Endothelial cell of umbilical vein (primary cell): ENCODE measurements at regions of chr2 and their contacts with region 1.

Region 1: GRCh38 chr2:112626604-112627059 is 19.1 kb upstream of the SLC20A1 start:
- DNase-seq: peak; percentile 86
- H3K4me3 ChIP-seq: peak overlapping the region in 1 of 3 experiments; percentile 14
- H3K27ac ChIP-seq: peak overlapping the region; percentile 91
- H3K4me1 ChIP-seq: peaks cover 73% of the 10 kb centered on the region
- H3K27me3 ChIP-seq: no peaks in the 10 kb centered on the region
- CTCF ChIP-seq: peak; percentile 93
- POLR2A ChIP-seq: no peak

Region 2: GRCh38 chr2:112645310-112646101 is 18.9 kb after region 1 on chr2 and contains the start of gene SLC20A1:
- CTCF ChIA-PET with region 1: interaction called, 92 read pairs
- POLR2A ChIA-PET with region 1: interaction called, 43 read pairs
- dilution Hi-C with region 1: no loop called
- intact Hi-C with region 1: loop called (anchors 1 kb)
- DNase-seq: peak; percentile 91
- H3K4me3 ChIP-seq: peak within 1 kb of the TSS; percentile 84 to 90 (median 89)
- H3K27ac ChIP-seq: peak within 1 kb of the TSS; percentile 90
- H3K4me1 ChIP-seq: peaks cover 71% of the 10 kb centered on the region
- H3K27me3 ChIP-seq: no peaks in the 10 kb centered on the region
- CTCF ChIP-seq: peak; percentile 38 to 40
- POLR2A ChIP-seq: peak; percentile 98
- total RNA-seq, gene SLC20A1: 141 and 149 TPM in 2 replicates

Region 3: DNA sequence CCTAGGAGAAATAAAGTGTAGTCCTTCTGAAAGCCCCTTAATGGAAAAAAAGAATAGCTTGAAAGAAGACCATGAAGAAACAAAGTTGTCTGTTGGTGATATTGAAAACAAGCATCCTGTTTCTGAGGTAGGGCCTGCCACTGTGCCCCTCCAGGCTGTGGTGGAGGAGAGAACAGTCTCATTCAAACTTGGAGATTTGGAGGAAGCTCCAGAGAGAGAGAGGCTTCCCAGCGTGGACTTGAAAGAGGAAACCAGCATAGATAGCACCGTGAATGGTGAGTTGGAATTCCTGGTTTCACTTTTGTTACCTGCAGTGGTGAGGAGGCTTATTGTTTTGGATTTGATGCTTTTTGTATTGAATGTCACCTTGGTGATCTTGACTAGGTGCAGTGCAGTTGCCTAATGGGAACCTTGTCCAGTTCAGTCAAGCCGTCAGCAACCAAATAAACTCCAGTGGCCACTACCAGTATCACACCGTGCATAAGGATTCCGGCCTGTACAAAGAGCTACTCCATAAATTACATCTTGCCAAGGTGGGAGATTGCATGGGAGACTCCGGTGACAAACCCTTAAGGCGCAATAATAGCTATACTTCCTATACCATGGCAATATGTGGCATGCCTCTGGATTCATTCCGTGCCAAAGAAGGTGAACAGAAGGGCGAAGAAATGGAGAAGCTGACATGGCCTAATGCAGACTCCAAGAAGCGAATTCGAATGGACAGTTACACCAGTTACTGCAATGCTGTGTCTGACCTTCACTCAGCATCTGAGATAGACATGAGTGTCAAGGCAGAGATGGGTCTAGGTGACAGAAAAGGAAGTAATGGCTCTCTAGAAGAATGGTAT is 32.4 kb after region 1 on chr2:
- CTCF ChIA-PET with region 1: interaction called, 25 read pairs
- POLR2A ChIA-PET with region 1: interaction called, 6 read pairs
- dilution Hi-C with region 1: no loop called
- intact Hi-C with region 1: loop called (anchors 5 kb)
- DNase-seq: no peak
- H3K4me3 ChIP-seq: no peak overlapping the region
- H3K27ac ChIP-seq: no peak overlapping the region
- H3K4me1 ChIP-seq: peaks cover 17% of the 10 kb centered on the region
- H3K27me3 ChIP-seq: no peaks in the 10 kb centered on the region
- CTCF ChIP-seq: no peak
- POLR2A ChIP-seq: no peak

Region 4: GRCh38 chr2:112666764-112667122 is 40.1 kb after region 1 on chr2:
- CTCF ChIA-PET with region 1: interaction called, 17 read pairs
- POLR2A ChIA-PET with region 1: no interaction called
- dilution Hi-C with region 1: no loop called
- intact Hi-C with region 1: loop called (anchors 5 kb)
- DNase-seq: no peak
- H3K4me3 ChIP-seq: no peak overlapping the region
- H3K27ac ChIP-seq: no peak overlapping the region
- H3K4me1 ChIP-seq: peaks cover 21% of the 10 kb centered on the region
- H3K27me3 ChIP-seq: no peaks in the 10 kb centered on the region
- CTCF ChIP-seq: no peak
- POLR2A ChIP-seq: no peak

Region 5: DNA sequence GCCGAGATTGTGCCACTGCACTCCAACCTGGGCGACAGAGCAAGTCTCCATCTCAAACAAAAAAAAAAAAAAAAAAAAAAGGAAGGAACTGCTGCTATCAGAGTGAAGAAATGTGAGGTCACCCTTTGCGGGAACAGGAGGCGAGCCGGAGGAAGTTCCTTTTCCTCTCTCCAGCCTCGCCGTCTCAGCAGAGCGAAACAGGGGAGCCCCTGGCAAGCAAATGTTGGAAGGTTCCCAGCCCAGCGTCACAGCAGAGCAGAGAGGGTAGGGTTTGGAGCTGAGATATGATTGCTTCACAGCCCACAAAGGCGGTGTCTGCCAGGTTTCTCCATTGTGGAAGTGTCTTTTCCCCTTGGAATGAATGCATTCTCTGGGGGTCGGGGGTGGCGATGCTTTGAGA is 47.6 kb after region 1 on chr2:
- CTCF ChIA-PET with region 1: interaction called, 9 read pairs
- POLR2A ChIA-PET with region 1: interaction called, 3 read pairs
- dilution Hi-C with region 1: no loop called
- intact Hi-C with region 1: loop called (anchors 1 kb)
- DNase-seq: peak; percentile 85
- H3K4me3 ChIP-seq: no peak overlapping the region
- H3K27ac ChIP-seq: peak overlapping the region; percentile 67
- H3K4me1 ChIP-seq: peaks cover 33% of the 10 kb centered on the region
- H3K27me3 ChIP-seq: no peaks in the 10 kb centered on the region
- CTCF ChIP-seq: no peak
- POLR2A ChIP-seq: no peak

Region 6: DNA sequence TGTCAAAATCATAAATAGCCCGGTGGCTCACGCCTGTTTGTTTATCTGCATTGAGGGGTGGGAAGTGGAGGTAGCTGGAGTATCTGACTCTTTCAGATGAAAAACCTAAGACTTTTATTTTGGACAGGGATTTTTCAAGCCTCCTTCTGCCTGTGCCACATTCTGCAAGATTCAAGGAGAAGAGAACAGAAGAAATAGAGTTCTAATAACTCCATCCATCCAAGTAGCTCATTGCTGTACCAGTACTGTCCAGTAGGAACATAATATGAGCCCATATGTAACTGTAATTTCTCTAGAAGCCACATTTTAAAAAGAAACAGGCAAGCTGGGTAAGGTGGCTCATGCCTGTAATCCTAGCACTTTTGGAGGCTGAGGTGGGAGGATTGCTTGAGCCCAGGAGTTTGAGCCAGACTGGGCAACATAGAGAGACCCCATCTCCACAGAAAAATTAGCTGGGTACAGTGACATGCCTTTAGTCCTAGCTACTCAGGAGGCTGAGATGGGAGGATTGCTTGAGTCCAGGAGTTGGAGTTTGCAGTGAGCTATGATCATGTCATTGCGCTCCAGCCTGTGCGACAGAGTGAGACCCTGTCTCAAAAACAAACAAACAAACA is 58.7 kb after region 1 on chr2:
- CTCF ChIA-PET with region 1: interaction called, 73 read pairs
- POLR2A ChIA-PET with region 1: no interaction called
- dilution Hi-C with region 1: no loop called
- intact Hi-C with region 1: no loop called
- DNase-seq: no peak
- H3K4me3 ChIP-seq: no peak overlapping the region
- H3K27ac ChIP-seq: no peak overlapping the region
- H3K4me1 ChIP-seq: peaks cover 27% of the 10 kb centered on the region
- H3K27me3 ChIP-seq: no peaks in the 10 kb centered on the region
- CTCF ChIP-seq: peak in 1 of 2 donors; percentile 16
- POLR2A ChIP-seq: no peak

Region 7: DNA sequence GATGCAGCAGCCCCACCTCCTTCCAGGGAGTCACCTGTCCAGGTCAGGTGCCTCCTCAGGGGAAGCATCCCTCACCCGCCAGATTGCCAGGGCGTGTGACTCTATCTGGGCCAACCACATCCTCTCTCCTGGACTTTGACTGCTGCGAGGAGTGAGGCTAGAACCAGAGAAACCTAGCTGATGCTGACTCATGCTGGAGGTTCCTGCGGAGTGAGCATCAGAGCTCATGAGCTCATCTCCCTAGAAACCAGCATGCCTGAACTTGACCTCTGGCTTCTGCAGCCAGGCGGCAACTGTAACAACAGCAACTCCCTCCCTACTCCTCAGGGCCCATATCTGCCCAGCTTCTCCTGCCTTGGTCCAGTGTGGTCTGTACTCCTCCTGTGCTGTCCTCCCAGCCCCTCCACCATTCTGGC is 65.9 kb after region 1 on chr2:
- CTCF ChIA-PET with region 1: interaction called, 73 read pairs
- POLR2A ChIA-PET with region 1: no interaction called
- dilution Hi-C with region 1: no loop called
- intact Hi-C with region 1: loop called (anchors 1 kb)
- DNase-seq: peak; percentile 73
- H3K4me3 ChIP-seq: no peak overlapping the region
- H3K27ac ChIP-seq: peak overlapping the region; percentile 72
- H3K4me1 ChIP-seq: peaks cover 41% of the 10 kb centered on the region
- H3K27me3 ChIP-seq: no peaks in the 10 kb centered on the region
- CTCF ChIP-seq: no peak
- POLR2A ChIP-seq: no peak